ENCODE measurements at regions of chr19 and their contacts with region 1.

Region 1: GRCh38 chr19:4815426-4816201 is 15.9 kb downstream of the TICAM1 start:
- DNase-seq: peak; percentile 86
- ATAC-seq: peak; percentile 84
- H3K4me3 Mint-ChIP-seq: peak overlapping the region; percentile 59
- H3K27ac Mint-ChIP-seq: peak overlapping the region; percentile 33
- H3K4me1 Mint-ChIP-seq: peaks cover 16% of the 10 kb centered on the region
- H3K27me3 Mint-ChIP-seq: no peaks in the 10 kb centered on the region

Region 2: DNA sequence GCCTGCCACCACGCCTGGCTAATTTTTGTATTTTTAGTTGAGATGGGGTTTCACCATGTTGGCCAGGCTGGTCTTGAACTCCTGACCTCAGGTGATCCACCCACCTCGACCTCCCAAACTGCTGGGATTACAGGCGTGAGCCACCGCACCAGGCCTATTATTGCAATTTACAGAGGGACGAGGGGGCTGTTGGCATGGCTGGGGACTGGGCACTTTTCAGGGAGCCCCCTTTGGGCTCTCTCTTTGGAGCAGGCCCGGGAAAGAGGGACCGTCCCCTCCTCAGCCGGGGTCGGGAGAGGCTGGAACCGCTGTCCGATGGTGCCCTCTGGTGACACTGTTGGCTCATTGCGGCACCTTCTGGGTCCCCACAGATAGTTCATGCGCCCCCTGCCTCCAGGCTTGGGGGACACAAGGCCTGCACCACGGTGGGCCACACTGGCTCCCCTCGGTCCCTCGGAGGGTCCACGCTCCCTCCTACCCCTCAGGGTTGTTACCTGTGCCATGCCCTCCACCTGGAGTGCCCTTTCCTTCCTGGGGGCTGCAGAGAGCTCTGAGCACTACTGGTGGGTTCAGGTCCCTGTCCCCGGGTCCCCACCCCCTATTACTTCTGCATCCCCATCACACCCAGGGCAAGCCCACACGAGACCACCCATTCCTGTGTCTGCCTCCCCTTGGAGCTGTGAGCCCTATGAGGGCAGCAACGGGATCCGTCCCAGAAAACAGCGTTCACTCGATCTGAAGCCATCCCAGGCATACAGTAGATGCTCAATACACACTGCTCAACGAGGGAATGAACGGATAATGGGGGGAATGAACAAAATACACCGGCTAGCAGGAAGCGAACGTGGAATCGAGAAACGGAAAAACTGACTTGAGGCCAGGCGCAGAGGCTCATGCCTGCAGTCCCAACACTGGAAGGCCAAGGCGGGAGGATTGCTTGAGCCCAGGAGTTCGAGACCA is 11.6 kb before region 1 on chr19:
- CTCF ChIA-PET with region 1: interaction called, 26 read pairs
- POLR2A ChIA-PET with region 1: no interaction called
- DNase-seq: peak; percentile 81
- ATAC-seq: peak; percentile 94
- H3K4me3 Mint-ChIP-seq: no peak overlapping the region
- H3K27ac Mint-ChIP-seq: no peak overlapping the region
- H3K4me1 Mint-ChIP-seq: no peaks in the 10 kb centered on the region
- H3K27me3 Mint-ChIP-seq: no peaks in the 10 kb centered on the region

Region 3: GRCh38 chr19:4844348-4845179 is 28.9 kb after region 1 on chr19:
- CTCF ChIA-PET with region 1: interaction called, 167 read pairs
- POLR2A ChIA-PET with region 1: no interaction called
- DNase-seq: no peak
- ATAC-seq: no peak
- H3K4me3 Mint-ChIP-seq: no peak overlapping the region
- H3K27ac Mint-ChIP-seq: no peak overlapping the region
- H3K4me1 Mint-ChIP-seq: peaks cover 10% of the 10 kb centered on the region
- H3K27me3 Mint-ChIP-seq: no peaks in the 10 kb centered on the region

Region 4: GRCh38 chr19:4867534-4868285 is 52.1 kb after region 1 on chr19 and contains the start of gene PLIN3:
- CTCF ChIA-PET with region 1: interaction called, 16 read pairs
- POLR2A ChIA-PET with region 1: no interaction called
- DNase-seq: peak; percentile 94
- ATAC-seq: peak; percentile 91
- H3K4me3 Mint-ChIP-seq: peak within 1 kb of the TSS; percentile 79
- H3K27ac Mint-ChIP-seq: peak within 1 kb of the TSS; percentile 68
- H3K4me1 Mint-ChIP-seq: peaks cover 26% of the 10 kb centered on the region
- H3K27me3 Mint-ChIP-seq: peaks cover 2% of the 10 kb centered on the region
- total RNA-seq, gene PLIN3: 27.5 to 32.8 TPM

Region 5: DNA sequence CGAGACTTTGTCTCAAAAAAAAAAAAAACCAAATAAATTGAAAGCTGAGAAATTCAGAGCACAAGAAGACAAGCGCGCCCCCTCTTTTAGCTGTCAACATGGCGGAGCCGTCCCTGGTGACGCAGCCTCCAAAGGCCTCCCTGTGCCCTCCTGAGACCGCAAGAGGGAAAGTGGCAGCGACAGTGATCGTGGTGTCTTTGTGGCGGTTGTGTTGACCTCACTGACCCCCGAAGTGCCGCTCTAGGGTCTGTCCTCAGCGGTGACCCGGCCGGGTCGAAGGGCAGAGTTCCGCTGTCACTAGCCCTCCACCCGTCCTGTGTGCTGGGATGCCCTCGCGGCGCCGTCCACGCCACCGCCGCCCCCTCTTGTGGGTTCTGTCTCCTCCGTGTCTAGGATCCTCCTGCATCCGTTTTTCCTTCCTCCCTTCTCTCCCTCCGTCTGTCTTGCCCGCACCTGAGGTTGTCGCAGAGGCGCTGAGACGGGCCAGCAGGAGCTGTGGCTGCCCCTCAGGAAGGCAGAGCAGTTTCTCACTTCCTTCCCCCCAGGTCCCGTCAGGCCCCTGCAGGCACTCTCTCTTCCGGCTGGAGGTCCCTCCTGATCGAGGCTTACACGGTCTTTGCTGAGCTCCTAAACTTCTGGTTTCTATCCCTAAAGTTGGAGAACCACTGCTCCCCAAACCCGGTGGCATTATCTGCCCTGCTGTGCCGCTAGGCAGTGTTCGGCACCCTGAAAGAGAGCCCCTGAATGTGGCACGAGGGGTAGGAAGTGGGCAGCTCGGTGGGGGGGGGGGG is 100.9 kb after region 1 on chr19:
- CTCF ChIA-PET with region 1: interaction called, 94 read pairs
- POLR2A ChIA-PET with region 1: no interaction called
- DNase-seq: peak; percentile 66
- ATAC-seq: peak; percentile 52
- H3K4me3 Mint-ChIP-seq: peak overlapping the region; percentile 85
- H3K27ac Mint-ChIP-seq: peak overlapping the region; percentile 95
- H3K4me1 Mint-ChIP-seq: peaks cover 61% of the 10 kb centered on the region
- H3K27me3 Mint-ChIP-seq: no peaks in the 10 kb centered on the region

Measured in activated CD8-positive, alpha-beta T cell treated with anti-CD3 and anti-CD28 coated beads, Interleukin-2, amount 10 ng/mL, durations not matched to agents 7 days and 5 days (primary cell).